Activated T-helper 2 cell treated with anti-CD3 and anti-CD28 coated beads, Interferon-gamma antibody, Interleukin-2, Interleukin-4, amounts not matched to agents 10 μg/mL and 5 μg/mL and 100 μg/mL, durations not matched to agents 14 hours and 24 hours and 36 hours (primary cell): ENCODE measurements at regions of chr1 and their contacts with region 1.

Region 1: DNA sequence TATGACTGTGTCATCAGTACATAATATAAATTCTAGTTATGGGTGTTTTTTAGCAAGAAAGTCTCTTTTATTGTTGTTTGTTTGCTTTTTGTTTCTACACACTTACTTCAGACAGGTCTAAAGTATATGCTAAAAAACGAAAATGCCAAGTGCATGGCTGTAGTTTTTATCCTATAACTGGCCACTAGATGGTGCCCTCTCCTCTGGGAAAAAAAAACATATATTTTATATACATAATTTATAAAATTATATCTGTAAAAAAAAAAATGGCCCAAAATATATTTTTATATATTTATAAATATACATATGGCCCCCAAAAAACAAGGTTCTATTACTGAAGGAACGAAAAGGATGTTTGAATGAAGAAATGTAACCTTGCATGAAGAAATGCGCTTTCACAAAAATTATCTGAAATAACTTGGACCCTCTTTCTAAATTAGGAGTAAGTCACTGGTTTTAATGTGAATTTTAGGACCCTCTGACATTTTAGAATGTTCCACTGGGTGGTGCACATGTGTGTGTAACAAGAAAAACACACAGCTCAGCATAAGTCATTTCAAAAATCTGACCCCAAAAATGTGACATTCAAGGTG is 93.5 kb downstream of the TTLL7 start:
- DNase-seq: no peak
- H3K4me3 Mint-ChIP-seq: no peak overlapping the region
- H3K27ac Mint-ChIP-seq: no peak overlapping the region
- H3K4me1 Mint-ChIP-seq: no peaks in the 10 kb centered on the region
- H3K27me3 Mint-ChIP-seq: peaks cover 20% of the 10 kb centered on the region

Region 2: DNA sequence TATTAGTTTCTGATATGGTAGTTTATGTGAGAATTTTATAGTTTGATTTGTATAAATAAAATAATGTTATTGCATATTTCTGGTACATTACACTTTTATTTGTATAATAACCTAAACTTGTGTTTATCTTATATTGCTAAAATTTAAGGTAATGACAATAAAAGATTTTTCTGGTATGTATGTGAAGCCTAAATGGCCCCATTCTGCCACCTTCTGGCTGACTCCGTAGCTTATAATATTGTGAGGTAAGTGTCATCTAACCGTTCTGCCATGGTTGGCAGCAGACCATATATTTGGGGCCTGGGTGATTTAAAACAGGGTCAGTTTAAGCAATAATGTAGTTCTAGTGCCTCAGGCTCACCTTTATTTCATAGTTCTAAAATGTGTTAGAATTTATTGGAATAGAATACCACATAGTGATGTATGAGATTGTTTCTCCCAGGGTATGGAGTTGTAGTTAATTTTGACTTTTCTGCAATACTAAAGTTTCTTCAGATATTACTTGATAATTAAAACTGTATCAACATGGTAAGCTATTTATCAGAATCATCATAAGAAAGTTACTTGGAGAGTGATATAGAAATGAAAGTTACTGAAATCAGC is 217.5 kb after region 1 on chr1:
- intact Hi-C with region 1: loop called (anchors 5 kb)
- DNase-seq: no peak
- H3K4me3 Mint-ChIP-seq: no peak overlapping the region
- H3K27ac Mint-ChIP-seq: no peak overlapping the region
- H3K4me1 Mint-ChIP-seq: no peaks in the 10 kb centered on the region
- H3K27me3 Mint-ChIP-seq: peaks cover 3% of the 10 kb centered on the region

Region 3: GRCh38 chr1:84433258-84434080 is 528.1 kb after region 1 on chr1:
- intact Hi-C with region 1: loop called (anchors 10 kb)
- DNase-seq: peak; percentile 54
- H3K4me3 Mint-ChIP-seq: peak overlapping the region; percentile 18
- H3K27ac Mint-ChIP-seq: no peak overlapping the region
- H3K4me1 Mint-ChIP-seq: peaks cover 3% of the 10 kb centered on the region
- H3K27me3 Mint-ChIP-seq: no peaks in the 10 kb centered on the region

Region 4: GRCh38 chr1:84772428-84772943 is 867.1 kb after region 1 on chr1:
- intact Hi-C with region 1: loop called (anchors 5 kb)
- DNase-seq: peak; percentile 30
- H3K4me3 Mint-ChIP-seq: no peak overlapping the region
- H3K27ac Mint-ChIP-seq: no peak overlapping the region
- H3K4me1 Mint-ChIP-seq: no peaks in the 10 kb centered on the region
- H3K27me3 Mint-ChIP-seq: peaks cover 24% of the 10 kb centered on the region